ENCODE measurements at regions of chr19 and their contacts with region 1.

Region 1: DNA sequence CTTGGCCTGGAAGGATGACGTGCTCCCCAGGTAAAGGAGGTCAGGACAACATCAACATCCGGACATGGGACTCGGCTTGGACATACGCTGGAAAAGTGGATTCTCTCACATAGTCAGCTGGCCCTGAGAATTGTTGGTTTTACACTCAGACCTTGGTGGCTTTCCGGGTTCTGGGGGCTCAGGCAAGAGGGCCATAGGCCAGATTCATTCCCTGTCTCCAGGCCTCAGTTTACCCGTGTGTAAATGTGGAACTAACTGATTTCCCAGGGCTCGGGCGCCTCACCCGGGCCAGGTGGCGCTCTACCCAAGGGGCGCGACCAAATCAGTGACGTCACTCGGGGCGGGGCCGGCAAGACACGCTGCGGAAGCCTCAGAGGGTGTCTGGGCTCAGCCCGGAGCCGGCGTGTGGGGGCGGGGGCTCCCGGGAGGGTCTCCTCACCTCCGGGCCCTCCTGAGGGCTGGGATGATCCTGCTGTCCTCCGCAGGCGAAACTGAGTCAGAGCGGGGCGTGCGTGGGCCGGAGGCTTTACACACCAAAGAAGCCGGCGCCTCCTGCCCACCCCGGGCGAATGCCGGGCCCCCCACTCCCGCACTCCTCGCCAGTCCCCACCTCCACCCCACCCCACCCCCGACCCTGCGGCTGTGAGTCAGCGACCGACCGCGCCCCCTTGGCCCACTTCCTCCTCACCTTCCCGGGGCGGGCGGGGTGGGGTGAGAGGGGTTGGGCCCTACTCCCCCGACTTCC is 861 bp upstream of the VASP start:
- DNase-seq: peak; percentile 94
- H3K4me3 Mint-ChIP-seq: peak overlapping the region; percentile 95
- H3K27ac Mint-ChIP-seq: peak overlapping the region; percentile 95
- H3K4me1 Mint-ChIP-seq: peaks cover 20% of the 10 kb centered on the region
- H3K27me3 Mint-ChIP-seq: peaks cover 3% of the 10 kb centered on the region

Region 2: DNA sequence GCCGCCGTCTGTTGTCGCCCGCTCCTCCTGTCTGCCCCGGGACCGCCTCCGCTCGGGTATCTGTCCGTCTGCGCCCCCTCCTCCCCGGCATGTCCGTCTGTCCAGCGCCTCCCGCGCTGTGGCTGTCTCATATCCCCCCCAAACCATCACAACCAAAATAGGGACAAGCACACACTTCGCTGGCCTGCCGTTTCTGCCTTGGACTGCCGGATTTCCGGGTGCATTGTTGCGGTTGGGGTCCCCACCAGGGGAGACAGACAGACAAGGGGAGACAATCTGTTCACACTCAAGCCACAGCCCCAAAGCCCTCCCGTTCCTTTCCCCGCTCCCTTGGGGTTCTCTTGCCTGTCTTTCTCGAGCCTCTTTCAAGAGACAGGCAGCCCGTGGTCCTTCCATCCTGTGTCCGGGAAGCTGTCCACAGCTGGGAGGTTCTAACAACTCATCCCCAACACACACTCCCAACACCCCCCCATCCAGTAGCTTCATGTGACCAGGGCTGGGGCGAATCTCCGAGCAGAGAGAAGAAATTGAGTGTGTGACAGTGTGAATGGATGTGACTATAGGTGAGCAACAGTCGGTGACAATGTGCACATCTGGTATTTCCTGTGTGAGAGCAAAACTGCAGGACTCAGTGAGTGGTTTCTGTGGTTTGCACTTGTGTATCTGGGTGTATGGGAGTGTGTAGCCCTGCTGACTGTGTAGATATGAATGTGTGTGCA is 55.1 kb before region 1 on chr19:
- intact Hi-C with region 1: loop called (anchors 2 kb)
- DNase-seq: peak; percentile 58
- H3K4me3 Mint-ChIP-seq: peak overlapping the region; percentile 75
- H3K27ac Mint-ChIP-seq: peak overlapping the region; percentile 92
- H3K4me1 Mint-ChIP-seq: peaks cover 38% of the 10 kb centered on the region
- H3K27me3 Mint-ChIP-seq: peaks cover 17% of the 10 kb centered on the region

Region 3: GRCh38 chr19:45469132-45469944 is 37.1 kb before region 1 on chr19:
- intact Hi-C with region 1: loop called (anchors 2 kb)
- DNase-seq: peak; percentile 92
- H3K4me3 Mint-ChIP-seq: peak overlapping the region; percentile 92
- H3K27ac Mint-ChIP-seq: peak overlapping the region; percentile 94
- H3K4me1 Mint-ChIP-seq: peaks cover 36% of the 10 kb centered on the region
- H3K27me3 Mint-ChIP-seq: peaks cover 33% of the 10 kb centered on the region

Region 4: DNA sequence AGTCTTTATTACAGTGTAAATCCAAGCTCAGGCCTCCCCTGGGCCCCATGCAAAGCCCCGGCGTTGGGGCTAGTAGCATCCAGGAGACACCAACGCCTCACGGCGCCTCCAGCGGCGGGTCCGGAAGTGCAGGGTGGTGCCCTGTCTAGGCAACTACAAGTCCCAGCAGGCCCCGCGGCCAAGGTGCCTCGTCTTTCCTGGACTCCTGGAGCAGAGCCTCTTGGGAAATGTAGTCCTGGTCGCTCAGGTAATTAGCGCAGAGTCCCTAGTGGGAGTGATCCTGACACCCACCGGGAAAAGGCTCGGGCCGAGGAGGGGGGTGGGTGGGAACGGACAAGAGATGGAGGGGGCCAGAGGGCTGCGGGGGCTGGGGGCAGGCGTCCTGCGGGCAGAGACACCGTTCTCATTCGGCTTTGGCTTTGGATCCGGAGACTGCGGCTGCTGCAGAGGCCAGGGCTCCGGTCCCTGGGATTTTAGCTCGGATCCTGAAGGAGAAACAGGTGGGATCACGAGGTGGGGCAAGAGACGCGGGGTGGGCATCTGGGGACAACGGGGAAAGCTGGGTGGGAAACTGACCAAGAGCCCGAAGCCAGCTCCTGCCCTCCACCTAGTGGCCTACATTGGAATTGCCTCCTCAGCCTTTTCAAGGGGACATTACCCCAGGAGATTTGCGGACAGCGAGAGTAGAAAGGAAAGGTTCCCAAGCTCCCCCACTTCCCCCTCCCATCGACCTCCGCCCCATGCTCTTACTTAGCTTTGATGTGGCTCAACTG is 20.9 kb before region 1 on chr19:
- intact Hi-C with region 1: loop called (anchors 1 kb)
- DNase-seq: peak; percentile 96
- H3K4me3 Mint-ChIP-seq: peak overlapping the region; percentile 87
- H3K27ac Mint-ChIP-seq: peak overlapping the region; percentile 79
- H3K4me1 Mint-ChIP-seq: peaks cover 6% of the 10 kb centered on the region
- H3K27me3 Mint-ChIP-seq: peaks cover 6% of the 10 kb centered on the region

Region 5: GRCh38 chr19:45492627-45493470 is 13.6 kb before region 1 on chr19:
- intact Hi-C with region 1: loop called (anchors 1 kb)
- DNase-seq: no peak
- H3K4me3 Mint-ChIP-seq: peak overlapping the region; percentile 82
- H3K27ac Mint-ChIP-seq: no peak overlapping the region
- H3K4me1 Mint-ChIP-seq: peaks cover 37% of the 10 kb centered on the region
- H3K27me3 Mint-ChIP-seq: peaks cover 25% of the 10 kb centered on the region

Region 6: DNA sequence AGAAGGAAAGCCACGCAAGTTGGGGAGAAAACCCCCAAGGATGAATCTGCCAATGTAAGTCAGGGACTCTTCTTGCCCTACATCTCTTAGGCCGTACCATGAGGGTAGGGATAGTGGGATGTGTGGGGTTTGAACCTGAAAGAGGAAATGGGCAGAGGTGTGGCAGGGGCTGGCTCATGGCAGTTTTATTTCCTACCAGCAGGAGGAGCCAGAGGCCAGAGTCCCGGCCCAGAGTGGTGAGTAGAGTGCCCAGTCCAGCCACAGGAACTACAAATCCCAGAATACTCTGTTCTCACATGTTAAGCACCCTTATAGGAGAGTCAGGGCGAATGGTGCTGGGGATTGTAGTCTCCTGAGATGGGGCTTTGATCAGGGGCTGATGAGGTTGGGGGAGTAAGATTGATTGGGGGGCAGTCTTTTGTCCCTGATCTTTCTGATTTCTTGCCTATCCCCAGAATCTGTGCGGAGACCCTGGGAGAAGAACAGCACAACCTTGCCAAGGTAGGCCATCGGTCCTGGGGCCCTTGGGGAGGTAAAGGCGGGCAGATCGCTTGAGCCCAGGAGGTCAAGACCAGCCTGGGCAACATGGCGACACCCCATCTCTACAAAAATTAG is 17.3 kb after region 1 on chr19:
- intact Hi-C with region 1: loop called (anchors 1 kb)
- DNase-seq: peak; percentile 65
- H3K4me3 Mint-ChIP-seq: no peak overlapping the region
- H3K27ac Mint-ChIP-seq: peak overlapping the region; percentile 37
- H3K4me1 Mint-ChIP-seq: peaks cover 14% of the 10 kb centered on the region
- H3K27me3 Mint-ChIP-seq: no peaks in the 10 kb centered on the region

Measured in activated T-helper 1 cell treated with anti-CD3 and anti-CD28 coated beads, Interleukin-12 subunit alpha, Interleukin-12 subunit beta, Interleukin-2, Interleukin-4 antibody, amounts not matched to agents 30 ng/mL and 10 ng/mL and 1 ng/mL, durations not matched to agents 14 hours and 24 hours and 36 hours (primary cell).